Activated T-helper 2 cell treated with anti-CD3 and anti-CD28 coated beads, Interferon-gamma antibody, Interleukin-2, Interleukin-4, amounts not matched to agents 10 μg/mL and 5 μg/mL and 100 μg/mL, durations not matched to agents 14 hours and 24 hours and 36 hours (primary cell): ENCODE measurements at regions of chr10 and their contacts with region 1.

Region 1: DNA sequence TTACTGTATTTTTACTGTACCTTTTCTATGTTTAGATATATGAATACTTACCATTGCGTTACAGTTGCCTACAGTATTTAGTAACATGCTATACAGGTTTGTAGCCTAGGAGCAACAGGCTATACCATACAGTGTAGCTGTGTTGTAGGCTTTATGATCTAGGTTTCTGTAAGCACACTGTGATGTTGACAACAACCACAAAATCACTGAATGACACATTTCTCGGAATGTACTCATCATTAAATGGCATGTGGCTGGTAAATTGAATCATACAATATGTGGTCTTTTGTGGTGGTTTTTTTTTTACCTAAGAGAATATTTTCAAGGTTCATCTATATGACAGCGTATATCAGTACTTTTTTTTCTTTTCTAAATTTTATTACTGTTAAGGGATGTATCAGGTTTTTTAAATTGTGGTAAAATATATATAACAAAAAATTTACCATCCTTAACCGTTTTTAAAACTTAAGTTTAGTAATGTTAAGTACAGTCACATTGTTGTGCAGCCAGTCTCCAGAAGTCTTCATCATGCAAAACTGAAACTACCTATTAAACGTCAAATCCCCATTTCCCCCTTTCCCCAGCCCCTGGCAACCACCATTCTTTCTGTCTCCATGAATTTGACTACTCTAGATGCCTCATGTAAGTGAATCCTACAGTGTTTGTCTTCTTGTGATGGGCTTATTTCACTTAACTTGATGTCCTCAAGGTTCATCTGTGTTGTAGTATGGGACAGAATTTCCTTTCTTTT is 21.5 kb downstream of the BTAF1 start:
- DNase-seq: no peak
- H3K4me3 Mint-ChIP-seq: peak overlapping the region; percentile 55
- H3K27ac Mint-ChIP-seq: peak overlapping the region; percentile 78
- H3K4me1 Mint-ChIP-seq: peaks cover 26% of the 10 kb centered on the region
- H3K27me3 Mint-ChIP-seq: no peaks in the 10 kb centered on the region

Region 2: DNA sequence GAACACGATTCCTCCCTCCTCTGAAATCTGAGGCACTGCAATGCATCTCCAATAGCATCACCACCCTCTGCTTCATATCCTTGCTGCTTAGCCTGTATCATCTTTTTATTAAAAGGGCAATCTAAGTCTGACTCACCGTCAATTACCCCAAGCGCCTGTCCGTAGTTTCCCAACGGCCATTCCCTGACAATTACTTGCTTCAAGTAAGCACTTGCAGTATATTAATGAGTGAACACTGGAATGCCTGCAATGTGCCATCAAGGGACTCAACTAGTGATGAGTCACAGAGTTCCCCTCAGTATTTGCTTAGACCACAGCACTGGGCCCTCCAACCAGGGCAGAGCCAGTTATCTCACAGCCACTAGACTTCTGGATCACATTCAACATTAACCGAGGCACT is 292.7 kb before region 1 on chr10:
- intact Hi-C with region 1: no loop called
- DNase-seq: no peak
- H3K4me3 Mint-ChIP-seq: no peak overlapping the region
- H3K27ac Mint-ChIP-seq: no peak overlapping the region
- H3K4me1 Mint-ChIP-seq: no peaks in the 10 kb centered on the region
- H3K27me3 Mint-ChIP-seq: peaks cover 5% of the 10 kb centered on the region

Region 3: GRCh38 chr10:91923371-91924211 is 21.5 kb before region 1 on chr10 and contains the start of gene BTAF1:
- intact Hi-C with region 1: loop called (anchors 1 kb)
- DNase-seq: peak; percentile 89
- H3K4me3 Mint-ChIP-seq: peak within 1 kb of the TSS; percentile 87
- H3K27ac Mint-ChIP-seq: peak within 1 kb of the TSS; percentile 100
- H3K4me1 Mint-ChIP-seq: peaks cover 29% of the 10 kb centered on the region
- H3K27me3 Mint-ChIP-seq: peaks cover 4% of the 10 kb centered on the region
- total RNA-seq, gene BTAF1: 66.0 and 68.2 TPM in 2 replicates

Region 4: GRCh38 chr10:91974960-91975359 is 29.9 kb after region 1 on chr10:
- intact Hi-C with region 1: loop called (anchors 2 kb)
- DNase-seq: no peak
- H3K4me3 Mint-ChIP-seq: no peak overlapping the region
- H3K27ac Mint-ChIP-seq: peak overlapping the region; percentile 84
- H3K4me1 Mint-ChIP-seq: peaks cover 30% of the 10 kb centered on the region
- H3K27me3 Mint-ChIP-seq: no peaks in the 10 kb centered on the region

Region 5: GRCh38 chr10:92103376-92104090 is 158.5 kb after region 1 on chr10:
- intact Hi-C with region 1: loop called (anchors 1 kb)
- DNase-seq: no peak
- H3K4me3 Mint-ChIP-seq: no peak overlapping the region
- H3K27ac Mint-ChIP-seq: no peak overlapping the region
- H3K4me1 Mint-ChIP-seq: peaks cover 19% of the 10 kb centered on the region
- H3K27me3 Mint-ChIP-seq: peaks cover 5% of the 10 kb centered on the region

Region 6: GRCh38 chr10:92434385-92434784 is 489.3 kb after region 1 on chr10:
- intact Hi-C with region 1: no loop called
- DNase-seq: no peak
- H3K4me3 Mint-ChIP-seq: no peak overlapping the region
- H3K27ac Mint-ChIP-seq: no peak overlapping the region
- H3K4me1 Mint-ChIP-seq: no peaks in the 10 kb centered on the region
- H3K27me3 Mint-ChIP-seq: no peaks in the 10 kb centered on the region